Dendritic cell treated with granulocyte-macrophage colony-stimulating factor and Interleukin-4, amounts not matched to agents 40 ng/mL and 50 ng/mL, for 4 days (primary cell): ENCODE measurements at regions of chr13 and their contacts with region 1.

Region 1: DNA sequence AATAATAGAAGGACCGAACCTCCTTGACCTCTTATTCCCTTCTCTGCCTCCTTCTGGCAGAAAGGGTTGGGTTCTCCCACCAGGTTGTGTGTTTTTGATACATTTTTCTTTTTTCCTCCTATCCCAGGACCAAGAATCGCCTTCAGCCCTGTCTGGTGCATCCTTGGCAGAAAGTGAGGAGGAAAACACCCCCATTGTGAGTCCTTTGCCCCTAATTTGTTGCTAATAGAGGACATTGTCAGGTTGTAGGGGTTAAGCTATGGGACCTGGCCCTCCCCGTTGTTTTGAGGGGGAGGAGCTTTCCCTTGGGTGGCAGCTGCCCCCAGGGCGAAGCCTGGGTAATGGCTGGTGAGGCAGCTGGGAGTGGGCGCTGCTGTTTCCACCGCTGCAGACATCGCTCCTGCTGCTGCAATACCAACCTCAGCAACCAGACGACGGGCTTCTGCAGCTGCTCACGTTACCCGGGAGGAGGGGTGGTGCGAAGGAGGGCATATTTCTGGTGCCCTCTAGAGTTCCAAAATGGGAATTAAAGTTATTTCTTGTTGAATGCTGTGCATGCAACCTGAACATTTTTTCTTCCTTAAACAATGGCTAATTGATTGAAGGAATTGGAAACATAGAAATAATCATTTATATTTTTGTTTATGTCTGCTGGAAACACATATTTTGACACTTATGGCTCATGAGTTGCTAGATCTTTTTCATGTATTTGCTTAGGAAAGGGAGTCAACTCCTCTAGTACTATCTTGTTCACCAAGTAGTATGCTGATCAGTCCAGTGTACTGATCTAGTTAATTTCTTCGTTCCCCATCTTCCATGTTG is 1.5 kb downstream of the ZMYM2 start:
- H3K4me3 Mint-ChIP-seq: peak overlapping the region; percentile 89
- H3K27ac Mint-ChIP-seq: peak overlapping the region; percentile 96
- H3K4me1 Mint-ChIP-seq: peaks cover 24% of the 10 kb centered on the region
- H3K27me3 Mint-ChIP-seq: no peaks in the 10 kb centered on the region

Region 2: DNA sequence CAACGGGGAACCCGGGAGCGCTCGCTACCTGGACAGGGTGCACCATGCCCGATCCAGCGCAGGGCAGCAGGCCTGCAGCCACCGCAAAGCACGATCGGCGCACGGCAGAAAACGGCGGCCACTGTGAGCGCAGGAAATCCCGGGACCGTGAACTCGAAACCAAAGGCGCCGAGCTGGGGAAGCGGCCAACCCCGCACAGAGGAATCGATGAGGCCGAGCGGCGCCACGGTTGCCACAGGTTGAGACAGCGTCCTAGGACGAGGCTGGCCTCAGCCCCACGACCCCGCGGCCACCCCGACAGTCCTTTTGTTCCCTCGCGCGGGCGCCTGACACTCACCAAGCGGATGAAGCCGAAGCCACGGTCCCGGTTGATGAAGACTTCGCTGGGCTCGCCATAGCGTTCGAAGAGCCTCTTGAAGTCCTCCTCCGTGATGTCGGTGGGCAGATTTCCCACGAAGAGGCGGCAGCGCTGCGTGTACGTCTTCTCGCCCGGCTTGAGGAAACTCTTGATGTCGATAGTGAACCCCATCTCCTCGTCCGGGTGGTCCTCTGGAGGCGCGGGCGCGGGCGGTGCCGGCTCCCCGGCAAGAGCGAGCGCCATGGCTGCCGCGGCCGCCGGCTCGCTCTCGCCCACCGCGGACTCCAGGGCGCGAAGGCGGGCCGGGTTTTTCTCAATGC is 177.9 kb before region 1 on chr13:
- intact Hi-C with region 1: loop called (anchors 2 kb)
- H3K4me3 Mint-ChIP-seq: peak overlapping the region; percentile 95
- H3K27ac Mint-ChIP-seq: peak overlapping the region; percentile 96
- H3K4me1 Mint-ChIP-seq: peaks cover 10% of the 10 kb centered on the region
- H3K27me3 Mint-ChIP-seq: no peaks in the 10 kb centered on the region